ENCODE measurements at regions of chr6 and their contacts with region 1.

Region 1: DNA sequence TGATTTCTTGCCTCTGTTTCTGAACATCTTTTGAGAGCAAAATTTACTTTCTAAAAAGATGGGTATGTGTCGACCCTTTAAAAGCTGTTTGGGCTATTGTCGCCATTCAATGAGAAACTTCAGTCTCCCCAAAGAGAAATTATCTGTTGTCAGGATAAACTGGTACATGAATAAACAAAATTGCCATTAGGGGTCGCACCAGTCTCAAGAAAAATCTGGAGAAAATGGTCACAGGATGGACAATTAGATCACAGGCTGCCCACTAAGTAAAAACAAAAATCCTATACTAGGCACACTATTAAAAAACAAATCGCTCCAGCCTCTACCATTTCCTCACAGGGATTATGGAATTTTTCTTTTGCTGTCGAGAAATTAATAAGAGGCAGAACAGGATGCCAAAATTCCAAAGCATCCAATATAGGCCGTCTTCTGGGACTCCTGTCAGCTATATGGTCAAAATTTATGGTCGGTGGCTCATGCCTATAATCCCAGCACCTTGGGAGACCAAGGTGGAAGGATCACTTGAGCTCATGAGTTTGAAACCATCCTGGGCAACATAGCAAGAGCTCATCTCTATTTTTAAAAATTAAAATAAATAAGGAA is 5.5 kb upstream of the HLA-E start:
- DNase-seq: no peak
- ATAC-seq: no peak
- H3K4me3 ChIP-seq: no peak overlapping the region
- H3K27ac ChIP-seq: no peak overlapping the region
- H3K4me1 ChIP-seq: peaks cover 9% of the 10 kb centered on the region
- H3K27me3 ChIP-seq: peaks cover 26% of the 10 kb centered on the region
- CTCF ChIP-seq: peak; percentile 66

Region 2: DNA sequence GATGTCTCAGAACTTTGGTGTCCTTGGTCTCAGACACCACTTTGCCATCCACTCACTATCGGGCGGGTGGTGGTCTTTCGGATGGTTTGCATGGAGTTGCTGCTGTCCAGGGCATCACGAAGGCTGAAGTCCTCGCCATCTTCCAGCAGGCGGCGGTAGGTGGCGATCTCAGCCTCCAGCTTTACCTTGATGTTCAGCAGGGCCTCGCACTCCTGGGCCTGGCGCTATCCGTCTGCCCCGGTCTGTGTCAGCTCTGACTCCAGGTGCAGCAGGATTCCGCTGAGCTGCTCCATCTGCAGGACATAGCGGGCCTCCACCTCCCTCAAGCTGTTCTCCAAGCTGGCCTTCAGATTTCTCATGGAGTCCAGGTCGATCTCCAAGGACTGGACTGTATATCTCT is 1514.6 kb before region 1 on chr6:
- CTCF ChIA-PET with region 1: no interaction called
- POLR2A ChIA-PET with region 1: no interaction called
- in situ Hi-C with region 1: no loop called
- intact Hi-C with region 1: no loop called
- DNase-seq: no peak
- ATAC-seq: no peak
- H3K4me3 ChIP-seq: no peak overlapping the region
- H3K27ac ChIP-seq: no peak overlapping the region
- H3K4me1 ChIP-seq: no peaks in the 10 kb centered on the region
- H3K27me3 ChIP-seq: no peaks in the 10 kb centered on the region
- CTCF ChIP-seq: no peak

Region 3: GRCh38 chr6:30533460-30534294 is 49.9 kb after region 1 on chr6:
- CTCF ChIA-PET with region 1: interaction called, 11 read pairs
- POLR2A ChIA-PET with region 1: interaction called, 5 read pairs
- in situ Hi-C with region 1: no loop called
- intact Hi-C with region 1: loop called (anchors 1 kb)
- DNase-seq: no peak
- ATAC-seq: no peak
- H3K4me3 ChIP-seq: peak overlapping the region in 1 of 2 experiments; percentile 16; a peak in 1 of 4 replicates
- H3K27ac ChIP-seq: no peak overlapping the region
- H3K4me1 ChIP-seq: no peaks in the 10 kb centered on the region
- H3K27me3 ChIP-seq: no peaks in the 10 kb centered on the region
- CTCF ChIP-seq: no peak

Measured in Panc1 (cell line).